Dendritic cell treated with granulocyte-macrophage colony-stimulating factor and Interleukin-4, amounts not matched to agents 40 ng/mL and 50 ng/mL, for 4 days (primary cell): ENCODE measurements at regions of chr1 and their contacts with region 1.

Region 1: DNA sequence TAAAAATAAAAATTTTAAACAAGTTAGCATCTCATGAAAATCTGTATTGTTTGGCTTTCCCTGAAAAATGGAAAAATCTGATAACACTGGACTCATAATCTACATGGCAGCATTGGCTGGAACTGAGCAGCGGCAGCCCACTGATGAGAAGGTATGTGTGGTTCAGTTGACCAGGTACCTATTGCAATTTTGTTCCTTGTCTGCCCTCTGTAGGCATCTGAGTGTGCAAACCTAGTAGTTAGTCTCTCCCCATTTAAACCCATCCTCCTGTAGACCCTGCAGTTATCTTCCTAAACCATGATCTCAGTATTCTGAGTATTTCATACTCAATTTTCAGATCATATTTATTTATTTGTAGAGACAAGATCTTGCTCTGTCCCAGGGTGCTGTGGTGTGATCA is 59.4 kb upstream of the SERBP1 start:
- H3K4me3 Mint-ChIP-seq: no peak overlapping the region
- H3K27ac Mint-ChIP-seq: no peak overlapping the region
- H3K4me1 Mint-ChIP-seq: no peaks in the 10 kb centered on the region
- H3K27me3 Mint-ChIP-seq: no peaks in the 10 kb centered on the region

Region 2: GRCh38 chr1:67418839-67419586 is 70.6 kb before region 1 on chr1:
- intact Hi-C with region 1: loop called (anchors 10 kb)
- H3K4me3 Mint-ChIP-seq: no peak overlapping the region
- H3K27ac Mint-ChIP-seq: no peak overlapping the region
- H3K4me1 Mint-ChIP-seq: peaks cover 4% of the 10 kb centered on the region
- H3K27me3 Mint-ChIP-seq: no peaks in the 10 kb centered on the region

Region 3: GRCh38 chr1:67522001-67522441 is 32.4 kb after region 1 on chr1:
- intact Hi-C with region 1: no loop called
- H3K4me3 Mint-ChIP-seq: no peak overlapping the region
- H3K27ac Mint-ChIP-seq: no peak overlapping the region
- H3K4me1 Mint-ChIP-seq: peaks cover 8% of the 10 kb centered on the region
- H3K27me3 Mint-ChIP-seq: peaks cover 3% of the 10 kb centered on the region